ENCODE measurements at regions of chr1 and their contacts with region 1.

Region 1: DNA sequence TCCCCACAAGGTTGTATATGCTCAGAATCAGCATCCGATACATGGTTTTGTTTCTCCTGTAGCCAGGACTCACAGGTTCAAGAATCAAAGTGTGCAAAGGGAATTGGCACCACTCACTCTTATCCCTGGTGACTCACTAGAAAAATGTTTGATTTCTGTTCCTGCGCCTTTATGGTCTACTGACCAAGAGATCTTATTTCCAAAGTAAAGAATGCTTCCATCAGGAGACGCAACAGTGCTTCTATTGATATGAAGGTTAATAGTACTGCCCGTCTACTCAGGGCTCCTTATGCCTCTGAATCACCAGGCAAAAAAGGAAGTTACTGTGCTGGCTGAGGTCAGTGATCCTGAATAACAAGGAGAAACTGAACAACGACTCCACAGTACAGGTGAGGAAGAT is 1392.0 kb upstream of the PRMT6 start:
- DNase-seq: no peak
- H3K4me3 ChIP-seq: no peak overlapping the region
- H3K4me3 Mint-ChIP-seq: peak overlapping the region in 1 of 8 donors; percentile 32
- H3K27ac ChIP-seq: no peak overlapping the region
- H3K27ac Mint-ChIP-seq: no peak overlapping the region
- H3K4me1 ChIP-seq: no peaks in the 10 kb centered on the region
- H3K4me1 Mint-ChIP-seq: no peaks in the 10 kb centered on the region
- H3K27me3 ChIP-seq: no peaks in the 10 kb centered on the region
- H3K27me3 Mint-ChIP-seq: no peaks in the 10 kb centered on the region

Region 2: DNA sequence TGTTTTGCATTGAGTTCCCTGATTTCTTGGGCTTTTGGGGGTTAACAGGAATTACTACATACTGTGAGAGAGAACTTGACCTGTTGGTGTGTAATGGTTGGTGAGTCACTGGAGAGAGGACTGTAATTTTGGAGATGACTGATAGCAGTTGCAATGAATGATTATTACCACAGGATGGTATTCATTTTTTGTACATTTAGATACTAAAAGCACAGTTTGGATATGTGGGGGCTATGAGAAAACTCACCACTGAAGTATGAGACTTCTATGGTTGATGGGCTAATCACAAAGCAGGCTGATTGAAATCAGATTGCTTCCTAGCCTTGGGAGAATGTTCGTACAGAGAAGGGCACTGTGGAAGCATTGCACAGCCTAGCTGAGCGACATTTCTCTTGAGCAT is 179.3 kb before region 1 on chr1:
- CTCF ChIA-PET with region 1: no interaction called
- POLR2A ChIA-PET with region 1: no interaction called
- intact Hi-C with region 1: no loop called
- DNase-seq: no peak
- H3K4me3 ChIP-seq: no peak overlapping the region
- H3K4me3 Mint-ChIP-seq: no peak overlapping the region
- H3K27ac ChIP-seq: no peak overlapping the region
- H3K27ac Mint-ChIP-seq: no peak overlapping the region
- H3K4me1 ChIP-seq: no peaks in the 10 kb centered on the region
- H3K4me1 Mint-ChIP-seq: no peaks in the 10 kb centered on the region
- H3K27me3 ChIP-seq: no peaks in the 10 kb centered on the region
- H3K27me3 Mint-ChIP-seq: no peaks in the 10 kb centered on the region

Region 3: GRCh38 chr1:105652109-105652508 is 12.4 kb before region 1 on chr1:
- CTCF ChIA-PET with region 1: no interaction called
- POLR2A ChIA-PET with region 1: no interaction called
- intact Hi-C with region 1: loop called (anchors 1 kb)
- DNase-seq: no peak
- H3K4me3 ChIP-seq: no peak overlapping the region
- H3K4me3 Mint-ChIP-seq: no peak overlapping the region
- H3K27ac ChIP-seq: no peak overlapping the region
- H3K27ac Mint-ChIP-seq: no peak overlapping the region
- H3K4me1 ChIP-seq: no peaks in the 10 kb centered on the region
- H3K4me1 Mint-ChIP-seq: no peaks in the 10 kb centered on the region
- H3K27me3 ChIP-seq: no peaks in the 10 kb centered on the region
- H3K27me3 Mint-ChIP-seq: no peaks in the 10 kb centered on the region